ENCODE measurements at regions of chr2 and their contacts with region 1.

Region 1: GRCh38 chr2:64311948-64312621 is 141.9 kb upstream of the LGALSL start:
- DNase-seq: no peak
- ATAC-seq: peak; percentile 80
- H3K4me3 ChIP-seq: no peak overlapping the region
- H3K27ac ChIP-seq: no peak overlapping the region
- H3K4me1 ChIP-seq: no peaks in the 10 kb centered on the region
- H3K27me3 ChIP-seq: no peaks in the 10 kb centered on the region
- CTCF ChIP-seq: peak in 2 of 3 experiments; percentile 38 to 55; a peak in 3 of 6 replicates
- EP300 ChIP-seq: no peak
- POLR2A ChIP-seq: no peak
- RAD21 ChIP-seq: no peak

Region 2: GRCh38 chr2:64222351-64222750 is 89.7 kb before region 1 on chr2:
- CTCF ChIA-PET with region 1: interaction called, 28 read pairs
- POLR2A ChIA-PET with region 1: no interaction called
- RAD21 ChIA-PET with region 1: interaction called, 13 read pairs
- SMC1A ChIA-PET with region 1: interaction called, 38 read pairs
- in situ Hi-C with region 1: no loop called
- intact Hi-C with region 1: no loop called
- DNase-seq: no peak
- ATAC-seq: no peak
- H3K4me3 ChIP-seq: no peak overlapping the region
- H3K27ac ChIP-seq: no peak overlapping the region; the same call in 1 of the 2 replicates
- H3K4me1 ChIP-seq: peaks cover 14% of the 10 kb centered on the region
- H3K27me3 ChIP-seq: no peaks in the 10 kb centered on the region
- CTCF ChIP-seq: no peak
- EP300 ChIP-seq: no peak
- POLR2A ChIP-seq: no peak
- RAD21 ChIP-seq: no peak

Region 3: GRCh38 chr2:64228126-64228678 is 83.9 kb before region 1 on chr2:
- CTCF ChIA-PET with region 1: interaction called, 4 read pairs
- POLR2A ChIA-PET with region 1: no interaction called
- RAD21 ChIA-PET with region 1: interaction called, 13 read pairs
- SMC1A ChIA-PET with region 1: interaction called, 13 read pairs
- in situ Hi-C with region 1: no loop called
- intact Hi-C with region 1: no loop called
- DNase-seq: peak; percentile 39
- ATAC-seq: peak; percentile 99
- H3K4me3 ChIP-seq: peak overlapping the region; percentile 56
- H3K27ac ChIP-seq: peak overlapping the region; percentile 34
- H3K4me1 ChIP-seq: peaks cover 5% of the 10 kb centered on the region
- H3K27me3 ChIP-seq: no peaks in the 10 kb centered on the region
- CTCF ChIP-seq: no peak
- EP300 ChIP-seq: no peak
- POLR2A ChIP-seq: peak; percentile 84
- RAD21 ChIP-seq: no peak

Region 4: DNA sequence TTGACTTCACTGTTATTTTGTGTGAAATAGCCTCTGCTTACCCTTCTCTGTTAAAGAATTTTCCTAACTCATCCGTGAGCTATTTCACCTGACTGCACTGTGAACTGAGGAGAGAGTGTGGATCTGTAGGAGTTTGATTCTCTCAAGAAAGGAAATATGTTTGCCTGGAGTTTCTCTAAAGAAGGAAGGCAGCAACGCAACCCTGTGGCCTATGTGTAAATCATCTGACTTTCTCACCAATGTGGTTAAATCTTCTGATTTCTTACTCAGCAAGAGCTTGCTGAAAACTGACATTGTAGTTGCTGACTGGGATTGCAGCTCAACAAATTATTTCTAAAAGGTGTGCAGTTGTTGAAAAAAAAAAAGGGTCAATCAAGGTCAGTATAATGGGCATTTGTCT is 13.9 kb before region 1 on chr2:
- CTCF ChIA-PET with region 1: interaction called, 77 read pairs
- POLR2A ChIA-PET with region 1: interaction called, 10 read pairs
- RAD21 ChIA-PET with region 1: interaction called, 52 read pairs
- SMC1A ChIA-PET with region 1: interaction called, 36 read pairs
- in situ Hi-C with region 1: no loop called
- intact Hi-C with region 1: no loop called
- DNase-seq: no peak
- ATAC-seq: no peak
- H3K4me3 ChIP-seq: no peak overlapping the region
- H3K27ac ChIP-seq: no peak overlapping the region
- H3K4me1 ChIP-seq: peaks cover 14% of the 10 kb centered on the region
- H3K27me3 ChIP-seq: no peaks in the 10 kb centered on the region
- CTCF ChIP-seq: no peak
- EP300 ChIP-seq: no peak
- POLR2A ChIP-seq: no peak
- RAD21 ChIP-seq: no peak

Region 5: GRCh38 chr2:65096948-65097347 is 784.9 kb after region 1 on chr2:
- CTCF ChIA-PET with region 1: no interaction called
- POLR2A ChIA-PET with region 1: no interaction called
- RAD21 ChIA-PET with region 1: no interaction called
- SMC1A ChIA-PET with region 1: no interaction called
- in situ Hi-C with region 1: no loop called
- intact Hi-C with region 1: no loop called
- DNase-seq: no peak
- ATAC-seq: no peak
- H3K4me3 ChIP-seq: no peak overlapping the region
- H3K27ac ChIP-seq: no peak overlapping the region
- H3K4me1 ChIP-seq: no peaks in the 10 kb centered on the region
- H3K27me3 ChIP-seq: no peaks in the 10 kb centered on the region
- CTCF ChIP-seq: no peak
- EP300 ChIP-seq: no peak
- POLR2A ChIP-seq: no peak
- RAD21 ChIP-seq: no peak

Measured in GM12878 (cell line).